ENCODE measurements at regions of chrX and their contacts with region 1.

Region 1: DNA sequence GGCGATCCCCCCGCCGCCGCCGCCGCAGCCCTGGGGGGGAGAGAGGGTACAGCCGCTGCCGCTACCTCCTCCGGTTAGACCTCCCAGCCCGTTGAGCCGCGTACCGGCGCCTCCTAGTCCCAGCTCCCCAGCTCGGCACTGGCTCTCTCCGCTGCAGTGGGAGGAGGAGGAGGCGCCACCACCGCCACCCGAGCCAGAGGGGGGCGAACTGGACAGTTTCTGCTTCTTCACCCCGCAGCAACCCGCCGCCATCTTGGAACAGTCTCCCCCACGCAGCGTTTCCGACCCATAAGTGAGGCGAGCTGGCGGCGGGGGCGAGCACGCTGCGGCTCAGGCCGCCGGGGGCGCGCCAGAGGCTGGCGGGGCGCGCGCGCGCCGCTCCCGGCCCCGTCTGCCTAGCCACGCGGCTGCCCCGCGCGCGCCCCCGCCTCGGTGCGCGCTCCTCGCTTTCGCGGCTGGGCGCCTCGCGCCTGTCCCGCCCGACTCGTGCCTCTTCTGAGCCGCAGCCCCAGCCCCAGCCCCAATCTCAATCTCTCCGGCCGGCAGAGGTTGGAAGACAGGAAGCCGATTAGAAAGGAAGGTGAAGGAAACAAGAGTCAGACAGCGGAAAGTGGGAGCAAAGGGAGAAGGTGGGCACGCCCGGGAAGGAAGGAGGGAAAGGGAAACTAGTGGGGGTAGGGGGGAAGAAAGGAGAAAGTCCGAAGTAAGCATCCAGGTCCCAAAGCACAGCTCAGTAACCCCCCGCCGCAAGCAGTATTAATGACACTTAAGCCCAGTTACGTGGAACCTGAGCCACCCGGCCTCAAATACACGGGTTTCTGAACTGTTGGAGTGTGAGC is at the start of gene AMMECR1:
- DNase-seq: peak; percentile 66 to 92 (median 77)
- ATAC-seq: peak; percentile 84
- H3K4me3 ChIP-seq: peak within 1 kb of the TSS; percentile 97
- H3K4me3 Mint-ChIP-seq: peak within 1 kb of the TSS; percentile 95
- H3K27ac ChIP-seq: peak within 1 kb of the TSS; percentile 69 to 71
- H3K27ac Mint-ChIP-seq: peak within 1 kb of the TSS; percentile 96
- H3K4me1 ChIP-seq: peaks cover 11% of the 10 kb centered on the region
- H3K4me1 Mint-ChIP-seq: peaks cover 44% of the 10 kb centered on the region
- H3K27me3 ChIP-seq: no peaks in the 10 kb centered on the region
- H3K27me3 Mint-ChIP-seq: no peaks in the 10 kb centered on the region
- CTCF ChIP-seq: no peak
- total RNA-seq, gene AMMECR1: 7.8 to 7.9 TPM

Region 2: DNA sequence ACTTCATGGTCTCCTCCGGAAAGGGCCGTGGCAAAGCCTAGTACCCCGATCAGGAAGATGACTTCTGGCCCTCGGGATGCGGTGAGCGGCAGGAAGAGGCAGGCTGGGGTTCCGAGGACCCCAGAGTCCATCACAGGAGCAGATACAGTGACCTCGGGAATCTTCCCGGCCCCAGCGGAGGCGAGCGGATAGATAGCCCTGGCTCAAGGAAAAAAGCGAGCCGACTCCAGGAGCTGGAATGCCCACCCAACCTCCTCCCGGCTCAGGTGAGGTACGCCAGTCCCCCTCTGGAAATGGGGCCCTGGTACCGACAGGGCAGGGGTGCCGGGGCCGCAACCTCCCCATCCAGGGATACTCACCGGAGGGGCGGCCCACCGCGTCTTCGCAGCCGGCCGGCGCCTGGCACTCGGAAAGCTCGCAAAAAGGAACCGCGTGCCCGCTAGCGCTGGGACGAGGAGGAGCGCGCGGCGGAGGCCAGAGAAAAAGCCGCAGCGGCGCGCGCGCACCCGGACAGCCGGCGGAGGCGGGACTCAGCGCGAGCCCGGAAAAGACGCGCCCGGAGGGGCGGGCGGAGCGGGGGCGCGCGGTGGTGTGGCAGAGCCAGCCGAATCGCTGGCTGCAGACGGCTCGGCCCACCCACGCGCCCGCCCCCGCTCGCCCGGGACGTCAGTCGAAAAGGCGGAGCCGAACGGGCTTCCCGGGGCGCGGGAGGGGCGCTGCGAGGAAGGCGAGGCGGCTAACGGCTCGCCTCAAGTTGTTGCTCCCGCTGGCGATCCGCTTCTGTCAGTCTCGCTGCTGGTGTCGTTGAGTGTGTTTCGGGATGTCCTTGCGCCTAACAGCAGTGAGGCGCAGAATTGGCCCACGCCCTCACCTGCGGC is 585.0 kb before region 1 on chrX and contains the start of gene ACSL4:
- CTCF ChIA-PET with region 1: no interaction called
- POLR2A ChIA-PET with region 1: interaction called, 20 read pairs
- intact Hi-C with region 1: loop called (anchors 2 to 10 kb)
- DNase-seq: peak; percentile 65 to 92 (median 82)
- ATAC-seq: peak; percentile 86
- H3K4me3 ChIP-seq: peak within 1 kb of the TSS; percentile 96
- H3K4me3 Mint-ChIP-seq: peak within 1 kb of the TSS; percentile 94
- H3K27ac ChIP-seq: peak within 1 kb of the TSS; percentile 69 to 82
- H3K27ac Mint-ChIP-seq: peak within 1 kb of the TSS; percentile 91
- H3K4me1 ChIP-seq: peaks cover 4% of the 10 kb centered on the region
- H3K4me1 Mint-ChIP-seq: peaks cover 47% of the 10 kb centered on the region
- H3K27me3 ChIP-seq: no peaks in the 10 kb centered on the region
- H3K27me3 Mint-ChIP-seq: no peaks in the 10 kb centered on the region
- CTCF ChIP-seq: no peak
- total RNA-seq, gene ACSL4: 11.1 to 14.5 TPM

Region 3: GRCh38 chrX:110167952-110168451 is 150.0 kb before region 1 on chrX:
- CTCF ChIA-PET with region 1: no interaction called
- POLR2A ChIA-PET with region 1: interaction called, 11 read pairs
- intact Hi-C with region 1: loop called in 1 of 2 experiments (anchors 5 kb)
- DNase-seq: peak; percentile 19 to 66 (median 39)
- ATAC-seq: peak; percentile 46
- H3K4me3 ChIP-seq: no peak overlapping the region
- H3K4me3 Mint-ChIP-seq: no peak overlapping the region
- H3K27ac ChIP-seq: no peak overlapping the region
- H3K27ac Mint-ChIP-seq: no peak overlapping the region
- H3K4me1 ChIP-seq: peaks cover 6% of the 10 kb centered on the region
- H3K4me1 Mint-ChIP-seq: peaks cover 5% of the 10 kb centered on the region
- H3K27me3 ChIP-seq: no peaks in the 10 kb centered on the region
- H3K27me3 Mint-ChIP-seq: no peaks in the 10 kb centered on the region
- CTCF ChIP-seq: peak; percentile 51

Region 4: DNA sequence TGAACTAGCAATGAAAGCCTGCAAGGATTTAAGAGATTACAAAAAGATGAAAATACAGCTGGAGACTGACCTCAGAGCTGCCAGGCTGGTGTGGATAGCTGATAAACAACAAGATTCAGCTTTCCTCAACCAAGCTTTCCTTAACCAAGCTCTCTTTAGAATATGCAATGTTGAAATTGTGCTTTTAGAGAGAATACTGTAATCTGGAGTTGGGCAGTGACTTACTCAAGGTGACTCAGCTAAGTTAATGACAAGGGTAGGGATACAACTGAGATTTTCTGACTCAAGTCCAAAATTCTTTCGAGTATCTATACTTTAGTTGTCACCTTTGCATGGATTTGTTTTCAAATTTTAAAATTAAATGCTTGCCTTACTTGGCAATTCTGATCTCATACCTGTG is 98.1 kb before region 1 on chrX:
- CTCF ChIA-PET with region 1: no interaction called
- POLR2A ChIA-PET with region 1: interaction called, 6 read pairs
- intact Hi-C with region 1: loop called (anchors 5 to 10 kb)
- DNase-seq: no peak
- ATAC-seq: no peak
- H3K4me3 ChIP-seq: no peak overlapping the region
- H3K4me3 Mint-ChIP-seq: no peak overlapping the region
- H3K27ac ChIP-seq: no peak overlapping the region
- H3K27ac Mint-ChIP-seq: no peak overlapping the region
- H3K4me1 ChIP-seq: no peaks in the 10 kb centered on the region
- H3K4me1 Mint-ChIP-seq: peaks cover 58% of the 10 kb centered on the region
- H3K27me3 ChIP-seq: no peaks in the 10 kb centered on the region
- H3K27me3 Mint-ChIP-seq: no peaks in the 10 kb centered on the region
- CTCF ChIP-seq: no peak

Region 5: DNA sequence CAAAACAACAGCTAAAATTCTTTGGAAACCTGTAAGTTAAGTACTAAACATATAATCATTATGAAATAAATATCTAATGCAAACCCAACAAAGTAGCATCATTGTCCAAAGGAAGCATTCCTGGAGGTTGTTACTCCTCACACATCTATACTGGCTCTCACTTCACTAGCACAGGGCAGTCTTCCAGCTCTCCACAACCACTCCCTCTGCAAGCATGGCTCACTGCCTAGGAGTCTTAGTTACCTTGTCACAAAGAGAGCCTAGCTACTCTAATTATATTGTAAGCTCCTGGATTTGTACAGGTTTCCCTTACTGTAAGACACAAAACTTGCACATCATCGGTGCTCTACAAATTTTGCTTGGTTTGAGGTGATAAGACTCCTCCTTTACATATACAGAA is 76.2 kb before region 1 on chrX:
- CTCF ChIA-PET with region 1: no interaction called
- POLR2A ChIA-PET with region 1: interaction called, 12 read pairs
- intact Hi-C with region 1: no loop called
- DNase-seq: no peak
- ATAC-seq: no peak
- H3K4me3 ChIP-seq: no peak overlapping the region
- H3K4me3 Mint-ChIP-seq: no peak overlapping the region
- H3K27ac ChIP-seq: no peak overlapping the region
- H3K27ac Mint-ChIP-seq: peak overlapping the region; percentile 77
- H3K4me1 ChIP-seq: peaks cover 13% of the 10 kb centered on the region
- H3K4me1 Mint-ChIP-seq: peaks cover 70% of the 10 kb centered on the region
- H3K27me3 ChIP-seq: no peaks in the 10 kb centered on the region
- H3K27me3 Mint-ChIP-seq: no peaks in the 10 kb centered on the region
- CTCF ChIP-seq: no peak

Region 6: GRCh38 chrX:110407910-110408545 is 90.0 kb after region 1 on chrX:
- CTCF ChIA-PET with region 1: no interaction called
- POLR2A ChIA-PET with region 1: no interaction called
- intact Hi-C with region 1: loop called in 1 of 2 experiments (anchors 5 kb)
- DNase-seq: peak in 11 of 14 experiments; percentile 3 to 70 (median 24)
- ATAC-seq: no peak
- H3K4me3 ChIP-seq: no peak overlapping the region
- H3K4me3 Mint-ChIP-seq: no peak overlapping the region
- H3K27ac ChIP-seq: no peak overlapping the region
- H3K27ac Mint-ChIP-seq: no peak overlapping the region
- H3K4me1 ChIP-seq: peaks cover 2% of the 10 kb centered on the region
- H3K4me1 Mint-ChIP-seq: no peaks in the 10 kb centered on the region
- H3K27me3 ChIP-seq: no peaks in the 10 kb centered on the region
- H3K27me3 Mint-ChIP-seq: no peaks in the 10 kb centered on the region
- CTCF ChIP-seq: peak; percentile 67